ENCODE measurements at regions of chr11 and their contacts with region 1.

Region 1: DNA sequence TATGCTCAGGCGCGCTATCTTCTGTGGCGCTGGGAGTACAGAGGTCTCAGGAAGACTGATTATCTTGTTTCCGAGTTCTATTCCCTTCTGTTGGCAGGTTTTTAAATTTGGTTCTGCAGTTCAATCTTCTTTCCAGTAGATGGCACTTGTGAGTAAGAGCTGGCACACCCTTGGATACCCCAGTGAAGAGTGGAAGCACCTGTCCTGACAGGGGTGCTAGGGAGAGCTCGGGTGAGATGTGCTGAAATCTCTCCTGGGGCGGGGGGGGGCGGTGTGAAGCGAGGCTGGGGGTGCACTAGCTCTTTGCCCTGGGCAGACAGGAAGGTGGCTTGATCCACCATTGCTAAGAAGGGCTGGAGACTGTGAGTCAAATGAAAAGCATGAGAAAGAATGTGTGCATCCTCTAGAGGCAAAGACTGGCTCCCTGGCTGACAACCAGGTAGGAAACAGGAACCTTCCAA is 679.9 kb upstream of the CCDC179 start:
- DNase-seq: peak; percentile 34
- H3K4me3 Mint-ChIP-seq: peak overlapping the region; percentile 29
- H3K27ac Mint-ChIP-seq: no peak overlapping the region
- H3K4me1 Mint-ChIP-seq: peaks cover 22% of the 10 kb centered on the region
- H3K27me3 Mint-ChIP-seq: no peaks in the 10 kb centered on the region
- CTCF ChIP-seq: peak; percentile 65

Region 2: GRCh38 chr11:23021287-23021863 is 518.8 kb before region 1 on chr11:
- CTCF ChIA-PET with region 1: no interaction called
- intact Hi-C with region 1: loop called (anchors 5 kb)
- DNase-seq: peak; percentile 34
- H3K4me3 Mint-ChIP-seq: no peak overlapping the region
- H3K27ac Mint-ChIP-seq: no peak overlapping the region
- H3K4me1 Mint-ChIP-seq: no peaks in the 10 kb centered on the region
- H3K27me3 Mint-ChIP-seq: no peaks in the 10 kb centered on the region
- CTCF ChIP-seq: peak; percentile 64

Region 3: GRCh38 chr11:23370580-23371275 is 169.4 kb before region 1 on chr11:
- CTCF ChIA-PET with region 1: no interaction called
- intact Hi-C with region 1: no loop called
- DNase-seq: no peak
- H3K4me3 Mint-ChIP-seq: no peak overlapping the region
- H3K27ac Mint-ChIP-seq: no peak overlapping the region
- H3K4me1 Mint-ChIP-seq: no peaks in the 10 kb centered on the region
- H3K27me3 Mint-ChIP-seq: no peaks in the 10 kb centered on the region
- CTCF ChIP-seq: no peak

Region 4: DNA sequence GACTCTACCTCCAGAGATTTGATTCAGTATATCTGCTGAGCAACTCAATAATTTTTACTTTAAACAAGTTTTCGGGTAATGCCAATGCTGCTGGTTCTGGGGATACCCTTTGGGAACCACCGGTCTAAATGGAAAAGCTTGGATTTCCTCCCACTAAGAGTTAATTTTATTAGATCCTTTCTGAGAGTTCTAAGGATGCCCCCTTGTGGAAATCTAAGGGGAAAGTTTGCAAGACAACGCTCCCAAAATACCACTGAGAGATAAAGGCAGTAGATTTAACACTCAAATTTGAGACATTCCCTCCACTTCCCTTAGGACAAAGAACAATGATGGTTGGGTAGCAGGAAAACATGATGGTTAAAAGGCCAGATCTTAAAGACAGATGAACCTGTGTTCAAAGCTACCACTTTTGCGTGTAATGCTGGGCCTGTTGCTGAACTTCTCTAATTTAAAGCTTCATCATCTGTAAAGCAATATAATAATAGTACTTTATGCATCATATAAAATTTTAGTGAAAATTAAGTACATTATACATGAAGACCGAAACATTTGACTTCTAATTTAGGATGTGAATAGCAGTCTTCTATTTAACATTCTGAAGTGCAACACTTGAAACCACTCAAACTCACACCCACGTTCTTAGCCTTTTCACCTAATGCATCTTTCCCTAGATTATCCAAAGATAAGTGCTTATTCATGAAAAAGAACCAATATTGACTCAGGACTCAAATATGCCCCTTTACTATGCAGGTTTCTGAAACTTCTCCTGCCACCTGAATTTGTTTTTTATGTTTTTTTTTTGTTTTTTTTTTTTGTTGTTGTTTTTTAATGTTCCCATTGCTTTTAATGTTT is 846.6 kb after region 1 on chr11:
- CTCF ChIA-PET with region 1: no interaction called
- intact Hi-C with region 1: loop called (anchors 10 kb)
- DNase-seq: peak; percentile 7
- H3K4me3 Mint-ChIP-seq: no peak overlapping the region
- H3K27ac Mint-ChIP-seq: no peak overlapping the region
- H3K4me1 Mint-ChIP-seq: no peaks in the 10 kb centered on the region
- H3K27me3 Mint-ChIP-seq: no peaks in the 10 kb centered on the region
- CTCF ChIP-seq: peak; percentile 42

Region 5: DNA sequence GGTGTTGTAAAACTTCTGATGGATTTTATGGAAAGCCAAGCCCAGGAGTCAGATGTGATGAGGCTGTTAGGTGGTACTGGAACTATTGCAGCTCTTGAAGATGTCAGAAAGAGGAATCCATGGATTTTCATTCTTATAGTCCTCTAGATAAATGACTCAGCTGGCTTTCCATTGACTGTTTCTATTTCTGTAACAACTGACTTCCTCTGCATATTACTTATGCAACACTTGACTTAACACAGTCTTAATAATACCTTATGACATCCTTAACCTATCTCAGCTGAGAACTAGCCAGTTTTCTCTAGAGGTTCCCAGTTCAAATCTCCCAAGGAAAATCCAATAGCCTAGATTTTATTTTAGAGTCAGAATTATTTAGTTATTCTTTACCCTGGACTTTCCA is 1220.5 kb after region 1 on chr11:
- CTCF ChIA-PET with region 1: no interaction called
- intact Hi-C with region 1: no loop called
- DNase-seq: no peak
- H3K4me3 Mint-ChIP-seq: no peak overlapping the region
- H3K27ac Mint-ChIP-seq: no peak overlapping the region
- H3K4me1 Mint-ChIP-seq: peaks cover 18% of the 10 kb centered on the region
- H3K27me3 Mint-ChIP-seq: no peaks in the 10 kb centered on the region
- CTCF ChIP-seq: no peak